ENCODE measurements at regions of chr5 and their contacts with region 1.

Region 1: DNA sequence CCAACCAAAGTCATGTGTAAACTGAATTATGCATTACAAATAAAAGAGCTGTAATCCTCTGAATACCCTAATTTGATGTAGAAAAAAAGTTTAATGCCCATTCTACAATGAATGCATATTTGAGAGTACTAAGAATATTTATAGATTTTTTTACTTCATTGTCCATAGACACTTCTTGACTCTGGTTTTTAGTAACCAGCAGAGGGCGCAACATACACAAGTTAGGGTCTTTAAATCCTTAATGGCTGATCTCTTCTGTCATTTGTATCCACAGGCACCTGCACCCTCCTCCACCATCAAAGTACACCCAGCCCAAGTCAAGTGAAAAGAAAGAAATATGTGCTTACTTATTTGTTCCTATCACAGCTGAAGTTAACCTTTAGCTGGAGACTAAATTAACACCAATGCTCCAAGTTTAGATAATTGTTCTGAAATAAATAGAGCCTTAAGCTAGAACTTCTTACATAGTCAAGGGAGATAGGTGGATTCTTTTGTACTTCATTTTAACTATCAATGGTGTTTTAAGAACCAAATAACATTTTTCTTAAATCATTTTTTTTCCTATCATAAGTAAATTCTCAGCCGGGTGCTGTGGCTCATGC is 524.2 kb upstream of the DAB2 start:
- H3K4me3 Mint-ChIP-seq: no peak overlapping the region
- H3K27ac Mint-ChIP-seq: no peak overlapping the region
- H3K4me1 Mint-ChIP-seq: peaks cover 32% of the 10 kb centered on the region
- H3K27me3 Mint-ChIP-seq: no peaks in the 10 kb centered on the region

Region 2: GRCh38 chr5:40017151-40017550 is 68.2 kb after region 1 on chr5:
- intact Hi-C with region 1: no loop called
- H3K4me3 Mint-ChIP-seq: no peak overlapping the region
- H3K27ac Mint-ChIP-seq: no peak overlapping the region
- H3K4me1 Mint-ChIP-seq: peaks cover 15% of the 10 kb centered on the region
- H3K27me3 Mint-ChIP-seq: no peaks in the 10 kb centered on the region

Region 3: DNA sequence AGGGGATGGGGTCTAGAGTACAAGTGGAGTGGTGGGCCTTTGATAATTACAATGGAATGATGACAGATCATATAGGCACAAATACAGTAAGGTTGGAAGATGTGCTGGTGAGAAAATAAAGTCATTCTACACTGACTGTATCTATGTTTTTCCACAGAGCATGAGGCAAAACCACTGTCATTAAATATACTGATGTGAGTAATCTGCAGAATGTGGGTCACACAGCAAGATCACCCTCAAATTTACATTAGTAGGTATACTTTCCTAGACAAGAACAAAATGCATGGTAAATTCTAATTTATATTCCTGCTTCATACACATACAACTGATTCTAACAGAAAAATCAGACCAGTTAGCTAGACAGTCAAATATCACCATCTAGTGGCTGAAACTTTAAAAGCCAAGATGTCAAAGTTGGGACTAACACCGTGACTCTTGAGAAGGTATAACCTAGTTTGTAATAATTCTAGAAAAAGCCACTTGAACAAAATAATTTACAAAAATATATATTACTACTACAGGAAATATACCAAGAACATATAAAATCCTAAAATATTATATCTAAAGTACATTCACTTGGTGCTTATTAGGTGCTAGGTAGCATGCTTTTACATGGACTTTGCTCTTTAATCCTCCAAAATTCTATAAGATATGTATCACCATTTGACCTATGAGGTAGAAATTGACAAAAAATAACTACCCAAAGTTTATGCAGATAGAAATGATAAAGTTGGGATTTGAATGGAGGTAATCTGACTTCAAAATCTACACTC is 787.3 kb after region 1 on chr5:
- intact Hi-C with region 1: loop called (anchors 5 kb)
- H3K4me3 Mint-ChIP-seq: no peak overlapping the region
- H3K27ac Mint-ChIP-seq: no peak overlapping the region
- H3K4me1 Mint-ChIP-seq: peaks cover 20% of the 10 kb centered on the region
- H3K27me3 Mint-ChIP-seq: no peaks in the 10 kb centered on the region

Measured in dendritic cell treated with granulocyte-macrophage colony-stimulating factor and Interleukin-4, amounts not matched to agents 40 ng/mL and 50 ng/mL, for 4 days (primary cell).